T-cell (primary cell): ENCODE measurements at regions of chr11 and their contacts with region 1.

Region 1: GRCh38 chr11:61091373-61092279 is 10.7 kb upstream of the CD5 start:
- DNase-seq: peak in 4 of 35 experiments; percentile 0 to 43 (median 20)
- ATAC-seq: peak in 3 of 4 experiments; percentile 39 to 50 (median 44)
- H3K4me3 ChIP-seq: peak overlapping the region; percentile 16 to 29
- H3K4me3 Mint-ChIP-seq: peak overlapping the region; percentile 51 to 68 (median 66)
- H3K27ac ChIP-seq: peak overlapping the region; percentile 88
- H3K27ac Mint-ChIP-seq: peak overlapping the region; percentile 91 to 99
- H3K4me1 ChIP-seq: peaks cover 27 to 43% of the 10 kb centered on the region in 2 experiments
- H3K4me1 Mint-ChIP-seq: peaks cover 51 to 66% (median 57%) of the 10 kb centered on the region in 3 donors
- H3K27me3 ChIP-seq: no peaks in the 10 kb centered on the region
- H3K27me3 Mint-ChIP-seq: no peaks in the 10 kb centered on the region

Region 2: DNA sequence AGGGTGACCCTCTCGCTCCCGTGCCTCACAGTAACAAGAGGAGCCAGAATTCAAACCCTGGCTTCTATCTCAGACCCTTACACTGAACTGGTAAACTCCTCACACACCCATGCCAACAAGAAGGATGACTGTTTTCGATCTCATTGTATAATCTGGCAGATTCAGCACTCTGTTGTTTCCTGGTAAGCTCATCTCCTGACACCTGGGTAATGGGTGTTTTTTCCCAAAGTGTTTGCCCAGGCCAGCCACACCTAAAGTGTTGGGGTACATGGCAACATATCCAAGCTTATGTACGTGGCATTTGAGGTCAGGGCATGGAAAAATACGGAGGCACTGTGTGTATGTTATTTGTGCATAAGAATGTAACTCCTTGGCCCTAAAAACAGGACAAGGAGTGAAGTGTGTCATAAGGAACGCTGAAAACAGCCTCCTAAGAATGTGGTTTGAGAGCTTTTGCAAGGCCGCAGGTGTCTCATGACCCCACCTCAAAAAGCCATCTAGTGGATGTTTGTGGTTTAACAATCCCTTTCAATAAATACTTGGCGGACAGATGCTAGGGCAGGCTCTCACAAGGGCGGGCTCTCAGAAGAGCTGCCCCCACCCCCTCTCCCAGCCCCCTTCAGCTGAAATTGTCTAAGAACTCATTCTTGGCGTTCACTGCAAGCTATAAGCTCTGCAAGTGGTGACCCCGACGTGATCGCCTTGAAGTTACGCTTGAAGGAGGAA is 335.2 kb before region 1 on chr11 and contains the start of gene MS4A15:
- CTCF ChIA-PET with region 1: no interaction called
- POLR2A ChIA-PET with region 1: no interaction called
- DNase-seq: peak in 1 of 35 experiments; percentile 24
- ATAC-seq: no peak
- H3K4me3 ChIP-seq: no peak within 1 kb of the TSS
- H3K4me3 Mint-ChIP-seq: no peak within 1 kb of the TSS
- H3K27ac ChIP-seq: no peak within 1 kb of the TSS
- H3K27ac Mint-ChIP-seq: no peak within 1 kb of the TSS
- H3K4me1 ChIP-seq: no peaks in the 10 kb centered on the region
- H3K4me1 Mint-ChIP-seq: no peaks in the 10 kb centered on the region
- H3K27me3 ChIP-seq: peaks cover 0 to 18% of the 10 kb centered on the region in 2 experiments
- H3K27me3 Mint-ChIP-seq: peaks cover 45 to 67% of the 10 kb centered on the region in 2 donors
- total RNA-seq, gene MS4A15: not detected

Region 3: DNA sequence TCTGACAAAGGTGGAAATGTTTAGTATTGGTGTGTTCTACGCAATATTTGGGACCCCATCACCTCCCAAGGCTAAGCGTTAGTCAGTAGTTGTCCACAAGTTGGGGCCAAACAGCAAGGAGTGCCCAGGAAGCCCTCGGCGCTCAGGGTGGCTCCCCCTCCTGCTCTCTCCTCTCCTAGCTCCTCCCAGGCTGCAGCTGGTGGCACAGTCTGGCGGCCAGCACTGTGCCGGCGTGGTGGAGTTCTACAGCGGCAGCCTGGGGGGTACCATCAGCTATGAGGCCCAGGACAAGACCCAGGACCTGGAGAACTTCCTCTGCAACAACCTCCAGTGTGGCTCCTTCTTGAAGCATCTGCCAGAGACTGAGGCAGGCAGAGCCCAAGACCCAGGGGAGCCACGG is 27.4 kb after region 1 on chr11:
- CTCF ChIA-PET with region 1: no interaction called
- POLR2A ChIA-PET with region 1: interaction called, 4 to 11 read pairs
- DNase-seq: peak in 1 of 35 experiments; percentile 13
- ATAC-seq: no peak
- H3K4me3 ChIP-seq: no peak overlapping the region
- H3K4me3 Mint-ChIP-seq: peak overlapping the region in 1 of 3 donors; percentile 72
- H3K27ac ChIP-seq: peak overlapping the region; percentile 80
- H3K27ac Mint-ChIP-seq: peak overlapping the region; percentile 95
- H3K4me1 ChIP-seq: peaks cover 42 to 73% of the 10 kb centered on the region in 2 experiments
- H3K4me1 Mint-ChIP-seq: peaks cover 72 to 87% (median 84%) of the 10 kb centered on the region in 3 donors
- H3K27me3 ChIP-seq: no peaks in the 10 kb centered on the region
- H3K27me3 Mint-ChIP-seq: no peaks in the 10 kb centered on the region

Region 4: GRCh38 chr11:61129639-61130523 is 38.3 kb after region 1 on chr11:
- CTCF ChIA-PET with region 1: no interaction called
- POLR2A ChIA-PET with region 1: interaction called in 1 of 2 experiments, 11 read pairs
- DNase-seq: peak; percentile 78 to 94 (median 87)
- ATAC-seq: peak; percentile 75 to 95 (median 86)
- H3K4me3 ChIP-seq: no peak overlapping the region
- H3K4me3 Mint-ChIP-seq: peak overlapping the region in 2 of 3 donors; percentile 3 to 47
- H3K27ac ChIP-seq: peak overlapping the region; percentile 39
- H3K27ac Mint-ChIP-seq: peak overlapping the region; percentile 71 to 86
- H3K4me1 ChIP-seq: peaks cover 6 to 23% of the 10 kb centered on the region in 2 experiments
- H3K4me1 Mint-ChIP-seq: peaks cover 20 to 35% (median 24%) of the 10 kb centered on the region in 3 donors
- H3K27me3 ChIP-seq: no peaks in the 10 kb centered on the region
- H3K27me3 Mint-ChIP-seq: no peaks in the 10 kb centered on the region